ENCODE measurements at regions of chr10 and their contacts with region 1.

Region 1: GRCh38 chr10:122051251-122051996 is 62.5 kb downstream of the TACC2 start:
- DNase-seq: no peak
- H3K4me3 ChIP-seq: no peak overlapping the region
- H3K27ac ChIP-seq: peak overlapping the region in 3 of 4 donors; percentile 60 to 78 (median 70)
- H3K4me1 ChIP-seq: peaks cover 10 to 52% (median 13%) of the 10 kb centered on the region in 3 donors
- H3K27me3 ChIP-seq: no peaks in the 10 kb centered on the region
- CTCF ChIP-seq: peak; percentile 16 to 70 (median 61)
- POLR2A ChIP-seq: no peak

Region 2: GRCh38 chr10:121900443-121901174 is 150.8 kb before region 1 on chr10:
- intact Hi-C with region 1: no loop called
- DNase-seq: no peak
- H3K4me3 ChIP-seq: no peak overlapping the region
- H3K27ac ChIP-seq: no peak overlapping the region
- H3K4me1 ChIP-seq: peaks cover 0 to 13% (median 0%) of the 10 kb centered on the region in 3 donors
- H3K27me3 ChIP-seq: no peaks in the 10 kb centered on the region
- CTCF ChIP-seq: peak; percentile 26 to 67 (median 58)
- POLR2A ChIP-seq: no peak

Region 3: GRCh38 chr10:122112625-122113160 is 61.3 kb after region 1 on chr10:
- intact Hi-C with region 1: loop called (anchors 10 kb)
- DNase-seq: no peak
- H3K4me3 ChIP-seq: peak overlapping the region; percentile 67 to 81 (median 78)
- H3K27ac ChIP-seq: peak overlapping the region; percentile 95 to 98 (median 97)
- H3K4me1 ChIP-seq: peaks cover 22 to 54% (median 29%) of the 10 kb centered on the region in 3 donors
- H3K27me3 ChIP-seq: peaks cover 0 to 16% (median 0%) of the 10 kb centered on the region in 4 donors
- CTCF ChIP-seq: peak in 5 of 6 experiments; percentile 22 to 80 (median 49)
- POLR2A ChIP-seq: peak in 2 of 4 donors; percentile 73 to 79